PC-3 (cell line): ENCODE measurements at regions of chr19 and their contacts with region 1.

Region 1: GRCh38 chr19:48333467-48334384 is 8.4 kb downstream of the EMP3 start:
- DNase-seq: peak; percentile 91
- ATAC-seq: peak; percentile 78
- H3K4me3 ChIP-seq: peak overlapping the region; percentile 69
- H3K27ac ChIP-seq: peak overlapping the region; percentile 28
- H3K4me1 ChIP-seq: peaks cover 13% of the 10 kb centered on the region
- H3K27me3 ChIP-seq: no peaks in the 10 kb centered on the region
- CTCF ChIP-seq: peak; percentile 81

Region 2: DNA sequence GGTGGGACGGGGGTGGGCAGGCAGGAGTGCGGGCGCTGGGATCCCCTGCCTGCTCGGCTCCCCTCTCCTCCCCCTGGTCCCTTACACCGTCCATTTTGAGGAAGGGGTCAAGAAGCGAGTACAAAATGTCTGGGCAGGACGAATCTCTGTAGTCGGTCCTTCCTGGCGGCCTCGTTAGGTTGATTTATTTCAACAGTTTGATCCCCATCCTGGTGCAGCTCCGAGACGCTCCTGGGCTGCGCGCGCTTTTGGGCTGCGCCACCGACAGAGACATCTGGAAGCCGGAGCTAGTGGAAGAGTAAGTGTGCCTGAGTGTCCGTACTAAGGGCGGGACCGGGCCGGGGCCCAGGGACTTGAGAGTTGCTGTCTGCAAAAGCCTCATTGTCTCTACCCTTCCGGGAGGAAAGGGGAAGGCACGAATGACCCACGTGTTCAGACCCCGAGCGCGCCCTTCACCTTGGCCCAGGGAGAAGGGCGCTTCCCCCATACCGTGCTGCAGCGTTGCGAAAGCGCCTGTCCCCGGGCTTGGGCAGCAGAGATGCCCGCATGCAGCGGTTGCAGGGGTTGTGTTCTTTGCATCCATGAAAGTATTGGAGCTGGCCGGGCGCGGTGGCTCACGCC is 62.1 kb before region 1 on chr19:
- CTCF ChIA-PET with region 1: interaction called, 5 read pairs
- POLR2A ChIA-PET with region 1: interaction called, 4 read pairs
- intact Hi-C with region 1: loop called (anchors 2 kb)
- DNase-seq: peak; percentile 23
- ATAC-seq: peak; percentile 53
- H3K4me3 ChIP-seq: peak overlapping the region; percentile 67
- H3K27ac ChIP-seq: no peak overlapping the region
- H3K4me1 ChIP-seq: peaks cover 13% of the 10 kb centered on the region
- H3K27me3 ChIP-seq: no peaks in the 10 kb centered on the region
- CTCF ChIP-seq: no peak

Region 3: DNA sequence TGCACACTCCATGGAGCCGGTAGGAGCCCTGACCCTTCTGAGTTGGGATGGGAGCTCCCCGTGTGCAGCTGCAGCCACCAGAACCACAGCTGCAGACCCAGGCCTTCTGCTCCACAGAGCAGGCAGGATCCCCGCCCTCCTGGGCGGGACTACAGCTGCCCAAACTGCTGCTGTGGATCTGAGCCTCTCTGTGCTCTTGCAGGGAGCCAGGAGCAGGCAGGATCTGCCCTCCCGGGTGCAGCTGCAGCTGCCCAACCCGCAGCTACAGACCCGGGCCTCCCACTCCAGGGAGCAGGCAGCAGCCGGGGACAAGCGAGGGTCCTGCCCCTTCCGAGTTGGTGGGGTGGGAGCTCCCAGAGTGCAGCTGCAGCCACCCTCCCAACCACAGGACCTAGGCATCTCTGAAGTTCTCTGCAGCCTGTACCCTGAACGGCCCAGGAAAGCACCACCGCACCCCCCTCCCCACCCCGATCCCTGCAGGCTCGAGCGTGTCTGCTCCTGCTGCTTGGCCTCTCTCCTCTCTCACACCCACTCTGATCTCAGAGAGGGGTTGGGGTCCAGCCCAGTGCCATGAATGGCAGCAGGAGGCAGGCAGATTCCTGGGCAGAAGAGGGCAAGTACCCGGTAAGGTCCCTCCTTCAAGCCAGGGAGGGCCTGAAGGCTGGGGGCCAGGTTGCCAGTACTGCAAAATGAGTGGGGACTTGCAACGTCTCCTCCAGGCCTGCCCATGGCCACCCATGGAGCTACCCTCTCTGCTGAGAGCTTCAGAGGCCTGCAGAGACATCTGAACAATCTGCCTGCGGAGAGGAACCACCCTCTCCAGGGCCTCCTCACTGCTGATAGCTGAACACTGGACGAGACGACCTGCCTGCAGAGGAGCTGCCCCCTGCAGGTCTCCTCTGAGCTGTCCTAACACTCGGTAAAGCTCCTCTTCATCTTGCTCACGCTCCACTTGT is 24.8 kb before region 1 on chr19:
- CTCF ChIA-PET with region 1: interaction called, 11 read pairs
- POLR2A ChIA-PET with region 1: no interaction called
- intact Hi-C with region 1: no loop called
- DNase-seq: no peak
- ATAC-seq: no peak
- H3K4me3 ChIP-seq: no peak overlapping the region
- H3K27ac ChIP-seq: no peak overlapping the region
- H3K4me1 ChIP-seq: no peaks in the 10 kb centered on the region
- H3K27me3 ChIP-seq: no peaks in the 10 kb centered on the region
- CTCF ChIP-seq: peak; percentile 15; the same call in 1 of the 2 replicates

Region 4: DNA sequence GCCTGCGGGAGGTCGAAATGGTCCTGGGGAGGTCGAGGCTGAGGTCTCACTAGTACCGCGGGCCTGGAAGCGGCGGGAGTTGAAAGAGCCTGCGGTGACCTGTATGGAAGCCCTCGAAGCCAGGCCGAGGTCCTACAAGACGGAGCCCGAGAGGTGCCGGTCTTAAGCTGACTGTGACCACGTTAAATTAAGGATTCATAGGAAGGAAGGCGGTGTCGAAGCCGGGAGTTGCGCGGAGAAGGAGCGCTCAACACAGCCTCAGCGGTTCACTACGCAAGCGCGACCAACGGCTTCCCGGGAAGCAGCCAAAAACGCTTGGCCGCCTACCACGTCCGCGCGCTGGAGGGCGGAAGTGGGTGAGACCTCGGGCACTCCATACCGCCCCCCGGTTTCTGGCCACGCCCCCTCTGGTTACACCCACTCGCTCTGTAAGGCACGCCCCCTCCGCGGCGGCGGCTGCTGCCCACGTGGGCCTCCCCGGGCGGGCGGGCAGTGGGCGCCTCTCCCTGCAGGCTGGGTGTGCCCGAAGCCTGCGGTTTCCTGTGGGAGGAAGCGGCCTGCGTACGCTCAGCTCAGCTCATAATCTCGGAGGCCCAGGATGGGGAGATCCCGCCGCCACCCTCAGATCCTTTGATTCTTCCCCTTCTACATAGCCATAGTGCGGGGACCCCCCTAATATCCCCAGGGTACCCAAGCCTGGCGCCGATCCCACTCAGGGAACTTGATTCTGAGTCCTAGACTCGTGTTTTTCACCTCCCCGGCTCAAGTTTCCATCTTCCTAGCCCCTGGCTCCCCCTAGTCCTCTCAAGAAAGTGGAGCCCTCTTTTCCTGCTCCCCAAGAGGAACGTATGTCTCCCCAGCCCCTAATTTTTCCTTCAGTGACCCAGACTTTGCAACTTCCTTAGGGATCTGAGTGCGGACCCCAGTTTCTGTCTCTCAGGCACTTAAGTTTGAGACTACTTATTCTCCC is 11.8 kb before region 1 on chr19:
- CTCF ChIA-PET with region 1: interaction called, 38 read pairs
- POLR2A ChIA-PET with region 1: interaction called, 11 read pairs
- intact Hi-C with region 1: loop called (anchors 1 kb)
- DNase-seq: peak; percentile 96
- ATAC-seq: peak; percentile 61
- H3K4me3 ChIP-seq: peak overlapping the region; percentile 74
- H3K27ac ChIP-seq: peak overlapping the region; percentile 88
- H3K4me1 ChIP-seq: peaks cover 42% of the 10 kb centered on the region
- H3K27me3 ChIP-seq: no peaks in the 10 kb centered on the region
- CTCF ChIP-seq: no peak